ENCODE measurements at regions of chr3 and their contacts with region 1.

Region 1: DNA sequence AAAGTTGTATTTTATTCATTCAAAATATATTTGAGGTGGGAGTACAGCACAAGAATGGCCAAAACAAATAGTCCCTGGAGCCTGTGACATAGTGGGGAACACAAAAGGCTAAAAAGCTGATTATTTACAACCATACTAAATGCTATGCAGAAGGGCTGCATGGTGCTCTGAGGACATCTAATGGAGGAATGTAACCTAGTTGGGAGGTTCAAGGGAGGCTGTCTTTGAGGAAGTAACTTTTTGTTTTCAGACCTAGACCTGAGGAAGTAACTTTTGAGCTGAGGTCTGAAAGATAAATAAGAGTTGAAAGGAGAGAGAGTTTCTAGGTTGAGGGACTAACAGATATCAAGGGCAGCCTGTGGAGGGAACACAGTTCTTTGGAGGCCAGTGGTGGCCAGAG is 34.8 kb upstream of the RASA2 start:
- DNase-seq: no peak
- ATAC-seq: peak; percentile 87
- H3K4me3 Mint-ChIP-seq: no peak overlapping the region
- H3K27ac Mint-ChIP-seq: no peak overlapping the region
- H3K4me1 Mint-ChIP-seq: peaks cover 5% of the 10 kb centered on the region
- H3K27me3 Mint-ChIP-seq: no peaks in the 10 kb centered on the region
- CTCF ChIP-seq: no peak

Region 2: GRCh38 chr3:140922634-140923033 is 529.4 kb before region 1 on chr3:
- CTCF ChIA-PET with region 1: no interaction called
- POLR2A ChIA-PET with region 1: no interaction called
- intact Hi-C with region 1: loop called (anchors 5 kb)
- DNase-seq: no peak
- ATAC-seq: peak; percentile 34
- H3K4me3 Mint-ChIP-seq: no peak overlapping the region
- H3K27ac Mint-ChIP-seq: no peak overlapping the region
- H3K4me1 Mint-ChIP-seq: no peaks in the 10 kb centered on the region
- H3K27me3 Mint-ChIP-seq: peaks cover 20% of the 10 kb centered on the region
- CTCF ChIP-seq: no peak

Region 3: DNA sequence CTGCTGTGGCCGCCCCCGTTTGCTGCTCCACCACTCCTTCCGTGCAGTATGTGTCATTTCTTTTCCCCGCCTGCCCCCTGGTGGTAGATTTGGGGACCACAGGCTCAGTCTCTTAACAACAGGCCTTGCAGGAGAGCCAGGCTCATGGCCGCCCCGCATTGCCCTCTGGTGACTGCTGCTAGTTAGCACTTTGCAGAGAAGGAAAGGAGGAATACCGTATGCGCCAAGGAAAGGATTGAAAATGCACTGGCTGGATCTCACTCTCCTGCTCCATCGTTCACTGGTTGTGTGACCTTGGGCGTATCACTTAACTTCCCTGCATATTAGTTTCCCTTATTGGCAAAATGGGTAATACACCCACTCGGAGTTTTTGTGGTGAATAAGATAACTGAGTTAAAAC is 259.7 kb before region 1 on chr3:
- CTCF ChIA-PET with region 1: no interaction called
- POLR2A ChIA-PET with region 1: no interaction called
- intact Hi-C with region 1: loop called (anchors 2 kb)
- DNase-seq: peak; percentile 85
- ATAC-seq: peak; percentile 100
- H3K4me3 Mint-ChIP-seq: no peak overlapping the region
- H3K27ac Mint-ChIP-seq: no peak overlapping the region
- H3K4me1 Mint-ChIP-seq: peaks cover 6% of the 10 kb centered on the region
- H3K27me3 Mint-ChIP-seq: peaks cover 23% of the 10 kb centered on the region
- CTCF ChIP-seq: no peak

Region 4: DNA sequence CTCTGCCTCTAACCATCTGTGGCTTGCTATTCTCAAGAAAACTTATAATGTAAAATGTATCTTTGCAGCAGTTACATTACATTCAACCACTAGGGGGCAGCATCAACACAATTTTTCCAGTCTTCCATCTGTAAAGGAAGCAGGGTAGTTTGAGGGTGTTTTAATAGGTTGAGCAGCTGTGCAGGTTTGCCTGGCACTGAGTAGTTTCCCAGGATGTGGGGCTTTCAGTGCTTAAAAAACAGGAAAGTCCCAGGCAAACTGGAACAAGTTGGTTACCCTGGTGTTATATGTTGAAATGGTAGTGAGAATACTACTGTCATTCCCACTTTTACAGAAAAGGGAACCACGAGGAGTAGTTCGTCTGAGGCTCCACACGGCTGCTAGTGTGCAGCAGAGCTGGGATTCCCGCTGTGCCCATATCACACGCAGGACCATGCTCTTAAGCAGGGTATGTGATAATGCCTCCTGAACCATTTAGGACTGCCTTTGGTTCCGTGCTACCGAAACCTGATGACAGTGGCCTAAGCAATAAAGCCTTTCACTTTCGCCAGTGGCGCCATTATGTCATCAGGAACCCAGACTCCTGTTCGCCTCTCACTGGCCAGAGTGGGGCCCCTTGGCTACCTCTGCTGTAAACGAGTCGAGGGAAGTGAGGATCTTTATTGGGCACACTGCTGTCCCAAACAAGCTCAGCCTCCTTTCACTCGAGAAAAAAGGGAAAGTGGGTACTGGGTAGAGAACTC is 148.4 kb before region 1 on chr3:
- CTCF ChIA-PET with region 1: interaction called, 107 read pairs
- POLR2A ChIA-PET with region 1: interaction called, 3 read pairs
- intact Hi-C with region 1: loop called (anchors 1 kb)
- DNase-seq: no peak
- ATAC-seq: peak; percentile 88
- H3K4me3 Mint-ChIP-seq: no peak overlapping the region
- H3K27ac Mint-ChIP-seq: no peak overlapping the region
- H3K4me1 Mint-ChIP-seq: peaks cover 2% of the 10 kb centered on the region
- H3K27me3 Mint-ChIP-seq: no peaks in the 10 kb centered on the region
- CTCF ChIP-seq: no peak

Region 5: GRCh38 chr3:141370065-141370533 is 81.9 kb before region 1 on chr3:
- CTCF ChIA-PET with region 1: interaction called, 8 read pairs
- POLR2A ChIA-PET with region 1: no interaction called
- intact Hi-C with region 1: loop called (anchors 1 kb)
- DNase-seq: no peak
- ATAC-seq: peak; percentile 99
- H3K4me3 Mint-ChIP-seq: no peak overlapping the region
- H3K27ac Mint-ChIP-seq: peak overlapping the region; percentile 15
- H3K4me1 Mint-ChIP-seq: peaks cover 13% of the 10 kb centered on the region
- H3K27me3 Mint-ChIP-seq: no peaks in the 10 kb centered on the region
- CTCF ChIP-seq: no peak

Region 6: GRCh38 chr3:141441381-141442364 is 10.4 kb before region 1 on chr3:
- CTCF ChIA-PET with region 1: interaction called, 22 read pairs
- POLR2A ChIA-PET with region 1: interaction called, 5 read pairs
- intact Hi-C with region 1: loop called (anchors 2 kb)
- DNase-seq: peak; percentile 60
- ATAC-seq: peak; percentile 100
- H3K4me3 Mint-ChIP-seq: peak overlapping the region; percentile 20
- H3K27ac Mint-ChIP-seq: peak overlapping the region; percentile 69
- H3K4me1 Mint-ChIP-seq: peaks cover 29% of the 10 kb centered on the region
- H3K27me3 Mint-ChIP-seq: no peaks in the 10 kb centered on the region
- CTCF ChIP-seq: peak; percentile 63